ENCODE measurements at regions of chr4 and their contacts with region 1.

Region 1: GRCh38 chr4:3021627-3022026 is 52.7 kb downstream of the HTT-AS start:
- DNase-seq: no peak
- CTCF ChIP-seq: no peak

Region 2: GRCh38 chr4:2995546-2996265 is 25.9 kb before region 1 on chr4:
- CTCF ChIA-PET with region 1: no interaction called
- POLR2A ChIA-PET with region 1: no interaction called
- DNase-seq: no peak
- CTCF ChIP-seq: no peak

Region 3: DNA sequence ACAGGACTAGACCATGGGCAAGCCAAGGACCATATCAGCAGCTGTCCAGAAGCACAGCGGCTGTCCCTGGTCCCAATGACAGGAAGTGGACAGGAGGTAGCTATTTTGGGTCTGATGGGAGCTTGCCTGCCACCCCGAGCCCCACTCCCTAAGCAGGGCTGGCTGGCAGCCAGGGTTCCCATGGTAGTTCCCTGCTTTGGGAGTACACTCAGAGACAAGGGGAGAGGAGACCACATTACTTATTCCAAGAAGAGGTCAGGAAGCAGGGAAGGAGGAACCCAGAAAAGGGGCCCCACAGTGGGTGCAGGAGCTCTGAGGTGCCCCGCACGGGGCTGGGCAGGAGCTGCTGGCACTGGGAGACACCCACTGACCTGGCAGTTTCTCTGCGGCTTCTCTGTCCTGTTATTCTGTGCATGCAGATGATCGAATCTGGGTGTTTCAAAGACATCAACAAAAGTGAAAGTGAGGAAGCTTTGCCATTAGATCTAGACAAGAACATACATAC is 16.4 kb after region 1 on chr4:
- CTCF ChIA-PET with region 1: interaction called, 19 read pairs
- POLR2A ChIA-PET with region 1: no interaction called
- DNase-seq: peak; percentile 36
- CTCF ChIP-seq: no peak

Region 4: DNA sequence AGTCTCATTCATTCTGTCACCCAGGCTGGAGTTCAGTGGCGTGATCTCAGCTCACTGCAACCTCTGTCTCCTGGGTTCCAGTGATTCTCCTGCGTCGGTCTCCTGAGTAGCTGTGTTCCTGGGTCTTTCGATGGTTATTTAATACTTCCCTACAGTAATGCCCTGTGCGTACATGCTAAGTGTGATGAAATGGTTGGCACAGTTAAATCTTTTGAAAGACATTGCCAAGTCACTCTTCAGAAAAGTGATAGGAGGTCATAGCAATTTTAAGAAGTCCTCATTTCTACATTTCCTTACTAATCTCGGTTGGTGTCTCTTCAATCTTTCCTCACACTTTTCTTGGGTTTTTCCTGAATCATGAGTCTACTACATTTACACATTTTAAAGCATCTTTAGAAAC is 38.3 kb after region 1 on chr4:
- CTCF ChIA-PET with region 1: no interaction called
- POLR2A ChIA-PET with region 1: no interaction called
- DNase-seq: no peak
- CTCF ChIP-seq: no peak

Region 5: GRCh38 chr4:3311489-3312184 is 290.0 kb after region 1 on chr4:
- CTCF ChIA-PET with region 1: no interaction called
- POLR2A ChIA-PET with region 1: no interaction called
- DNase-seq: no peak
- CTCF ChIP-seq: no peak